ENCODE measurements at regions of chr5 and their contacts with region 1.

Region 1: DNA sequence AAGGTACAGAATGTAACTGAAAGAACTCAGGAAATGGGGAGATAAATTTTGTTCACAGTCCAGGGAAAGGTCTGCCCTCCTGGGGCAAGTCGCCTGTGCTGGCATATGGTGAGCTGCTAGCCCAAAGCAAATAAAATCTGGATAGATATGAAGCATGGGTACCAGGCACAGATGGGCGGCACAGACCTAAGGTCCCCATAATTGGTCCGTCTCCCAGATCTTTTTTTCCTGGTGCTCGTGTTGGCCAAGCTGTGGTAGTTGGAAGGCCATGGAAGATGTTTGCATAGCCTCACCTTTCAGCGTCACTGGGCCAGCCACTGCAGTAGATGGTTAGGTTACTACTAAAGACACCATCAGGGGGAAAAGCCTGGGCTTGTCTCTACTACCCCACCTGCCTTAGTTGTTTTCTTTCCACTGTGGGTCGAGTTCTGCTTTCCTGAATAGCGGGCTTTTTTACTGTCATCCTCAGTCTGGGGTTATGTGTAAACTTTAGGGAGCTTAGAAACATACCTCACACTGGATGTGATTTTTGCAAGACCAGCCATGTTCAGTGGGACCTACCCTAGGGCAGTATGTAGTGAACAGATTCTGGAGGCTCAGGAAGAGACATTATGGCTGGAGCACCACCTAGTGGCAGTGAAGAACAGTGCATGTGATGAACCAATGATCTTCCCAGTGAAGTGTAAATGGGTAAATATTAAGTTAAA is 24.2 kb upstream of the GLRX start:
- DNase-seq: peak; percentile 83
- H3K4me3 ChIP-seq: no peak overlapping the region
- H3K27ac ChIP-seq: no peak overlapping the region
- H3K4me1 ChIP-seq: peaks cover 44% of the 10 kb centered on the region
- H3K27me3 ChIP-seq: no peaks in the 10 kb centered on the region

Region 2: GRCh38 chr5:95572016-95572415 is 274.7 kb before region 1 on chr5:
- in situ Hi-C with region 1: no loop called
- DNase-seq: no peak
- H3K4me3 ChIP-seq: no peak overlapping the region
- H3K27ac ChIP-seq: no peak overlapping the region
- H3K4me1 ChIP-seq: no peaks in the 10 kb centered on the region
- H3K27me3 ChIP-seq: no peaks in the 10 kb centered on the region

Region 3: GRCh38 chr5:95664204-95664786 is 182.4 kb before region 1 on chr5:
- in situ Hi-C with region 1: loop called (anchors 10 kb)
- DNase-seq: peak; percentile 67
- H3K4me3 ChIP-seq: no peak overlapping the region
- H3K27ac ChIP-seq: no peak overlapping the region
- H3K4me1 ChIP-seq: peaks cover 17% of the 10 kb centered on the region
- H3K27me3 ChIP-seq: no peaks in the 10 kb centered on the region

Region 4: GRCh38 chr5:97208714-97209113 is 1362.0 kb after region 1 on chr5:
- in situ Hi-C with region 1: no loop called
- DNase-seq: no peak
- H3K4me3 ChIP-seq: no peak overlapping the region
- H3K27ac ChIP-seq: no peak overlapping the region
- H3K4me1 ChIP-seq: no peaks in the 10 kb centered on the region
- H3K27me3 ChIP-seq: no peaks in the 10 kb centered on the region